ENCODE measurements at regions of chr17 and their contacts with region 1.

Region 1: DNA sequence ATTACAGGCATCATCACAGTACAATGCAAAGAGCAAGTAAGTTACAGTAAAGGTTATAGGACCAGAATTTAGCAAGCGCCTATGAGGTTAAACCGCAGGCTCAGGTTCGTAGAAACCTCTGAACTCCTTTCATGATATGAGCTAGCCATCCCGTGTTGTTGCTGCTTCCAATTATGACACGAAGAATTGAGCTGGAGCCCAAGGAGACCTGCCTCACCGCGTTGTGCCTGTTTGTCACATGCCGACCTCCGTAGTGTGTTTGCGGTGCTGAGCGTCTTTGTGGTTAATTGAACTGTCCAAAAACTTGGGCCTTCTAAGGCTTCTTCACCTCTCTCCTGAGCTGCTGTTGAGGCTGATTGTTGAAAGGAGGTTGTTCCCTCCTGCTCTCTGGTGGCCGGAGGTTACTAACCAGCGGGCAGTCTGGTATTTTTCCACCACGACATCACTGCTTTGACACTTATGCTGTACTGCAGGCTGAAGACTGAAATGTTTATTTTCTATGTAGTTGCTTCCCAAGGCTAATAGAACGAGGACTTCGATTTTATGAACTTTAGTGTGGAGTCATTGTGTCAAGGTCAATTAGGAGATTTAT is 67.5 kb downstream of the SEC14L1 start:
- DNase-seq: peak; percentile 68 to 77
- ATAC-seq: peak; percentile 80 to 93
- H3K4me3 ChIP-seq: no peak overlapping the region
- H3K27ac ChIP-seq: peak overlapping the region; percentile 73 to 86 (median 80)
- H3K4me1 ChIP-seq: peaks cover 32 to 38% of the 10 kb centered on the region in 2 donors
- H3K27me3 ChIP-seq: no peaks in the 10 kb centered on the region
- CTCF ChIP-seq: peak; percentile 41 to 50 (median 47)
- POLR2A ChIP-seq: no peak

Region 2: GRCh38 chr17:77164483-77165091 is 43.7 kb before region 1 on chr17:
- in situ Hi-C with region 1: no loop called
- intact Hi-C with region 1: loop called (anchors 5 kb)
- DNase-seq: peak in 1 of 2 donors; percentile 45
- ATAC-seq: peak; percentile 69 to 82
- H3K4me3 ChIP-seq: peak overlapping the region in 2 of 4 donors; percentile 21 to 27
- H3K27ac ChIP-seq: peak overlapping the region; percentile 85 to 96 (median 90)
- H3K4me1 ChIP-seq: peaks cover 67 to 78% of the 10 kb centered on the region in 2 donors
- H3K27me3 ChIP-seq: no peaks in the 10 kb centered on the region
- CTCF ChIP-seq: no peak
- POLR2A ChIP-seq: no peak

Region 3: GRCh38 chr17:77247048-77247541 is 38.8 kb after region 1 on chr17:
- in situ Hi-C with region 1: no loop called
- intact Hi-C with region 1: loop called (anchors 2 kb)
- DNase-seq: peak; percentile 60 to 63
- ATAC-seq: peak; percentile 79 to 90
- H3K4me3 ChIP-seq: peak overlapping the region; percentile 58 to 70 (median 60)
- H3K27ac ChIP-seq: peak overlapping the region in 2 of 4 donors; percentile 37 to 45
- H3K4me1 ChIP-seq: peaks cover 6 to 11% of the 10 kb centered on the region in 2 donors
- H3K27me3 ChIP-seq: no peaks in the 10 kb centered on the region
- CTCF ChIP-seq: peak; percentile 99
- POLR2A ChIP-seq: no peak

Measured in gastrocnemius medialis (tissue), 4 donors.